ENCODE measurements at regions of chr10 and their contacts with region 1.

Region 1: GRCh38 chr10:61923213-61923949 is 21.9 kb downstream of the ARID5B start:
- DNase-seq: no peak
- ATAC-seq: no peak
- H3K4me3 Mint-ChIP-seq: no peak overlapping the region
- H3K27ac Mint-ChIP-seq: no peak overlapping the region
- H3K4me1 Mint-ChIP-seq: peaks cover 39% of the 10 kb centered on the region
- H3K27me3 Mint-ChIP-seq: no peaks in the 10 kb centered on the region
- CTCF ChIP-seq: no peak

Region 2: DNA sequence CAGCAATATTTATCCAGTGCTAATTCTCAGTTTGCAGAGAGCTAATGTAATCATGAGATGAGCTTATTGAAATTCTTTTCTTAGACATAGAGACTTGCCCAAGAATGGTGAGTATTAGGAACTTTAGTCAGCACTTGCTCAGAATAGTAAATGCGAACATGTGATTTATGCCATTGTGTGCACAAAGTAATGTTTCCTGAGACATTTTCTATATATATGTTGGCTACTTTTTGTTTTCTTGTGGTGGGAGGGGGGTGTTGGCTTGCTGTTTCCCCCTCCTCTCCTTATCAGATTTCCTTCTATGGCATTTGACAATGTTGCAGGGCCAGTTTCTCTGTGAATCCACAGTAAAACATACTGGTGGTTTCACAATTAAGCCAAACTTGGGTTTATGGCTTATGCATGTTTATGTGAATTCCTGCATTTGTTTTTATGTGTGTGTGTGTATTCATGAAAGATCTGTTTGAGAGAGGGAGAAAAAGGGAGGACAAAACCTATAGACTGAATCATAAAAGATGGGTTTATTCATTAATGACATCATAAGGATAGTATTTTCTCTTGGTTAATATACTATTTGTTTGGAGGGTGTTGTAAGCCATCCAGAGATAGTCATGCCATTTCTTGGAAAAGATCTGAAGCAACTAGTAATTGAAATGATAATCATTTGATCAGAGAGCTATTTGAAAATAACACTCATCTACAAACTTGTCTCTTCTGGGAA is 14.4 kb after region 1 on chr10:
- CTCF ChIA-PET with region 1: interaction called, 11 read pairs
- POLR2A ChIA-PET with region 1: interaction called, 10 read pairs
- intact Hi-C with region 1: no loop called
- DNase-seq: no peak
- ATAC-seq: peak; percentile 41
- H3K4me3 Mint-ChIP-seq: peak overlapping the region; percentile 9
- H3K27ac Mint-ChIP-seq: peak overlapping the region; percentile 92
- H3K4me1 Mint-ChIP-seq: peaks cover 81% of the 10 kb centered on the region
- H3K27me3 Mint-ChIP-seq: no peaks in the 10 kb centered on the region
- CTCF ChIP-seq: no peak

Region 3: GRCh38 chr10:61981402-61981841 is 58.0 kb after region 1 on chr10:
- CTCF ChIA-PET with region 1: no interaction called
- POLR2A ChIA-PET with region 1: no interaction called
- intact Hi-C with region 1: no loop called
- DNase-seq: no peak
- ATAC-seq: no peak
- H3K4me3 Mint-ChIP-seq: no peak overlapping the region
- H3K27ac Mint-ChIP-seq: no peak overlapping the region
- H3K4me1 Mint-ChIP-seq: peaks cover 48% of the 10 kb centered on the region
- H3K27me3 Mint-ChIP-seq: no peaks in the 10 kb centered on the region
- CTCF ChIP-seq: no peak

Region 4: DNA sequence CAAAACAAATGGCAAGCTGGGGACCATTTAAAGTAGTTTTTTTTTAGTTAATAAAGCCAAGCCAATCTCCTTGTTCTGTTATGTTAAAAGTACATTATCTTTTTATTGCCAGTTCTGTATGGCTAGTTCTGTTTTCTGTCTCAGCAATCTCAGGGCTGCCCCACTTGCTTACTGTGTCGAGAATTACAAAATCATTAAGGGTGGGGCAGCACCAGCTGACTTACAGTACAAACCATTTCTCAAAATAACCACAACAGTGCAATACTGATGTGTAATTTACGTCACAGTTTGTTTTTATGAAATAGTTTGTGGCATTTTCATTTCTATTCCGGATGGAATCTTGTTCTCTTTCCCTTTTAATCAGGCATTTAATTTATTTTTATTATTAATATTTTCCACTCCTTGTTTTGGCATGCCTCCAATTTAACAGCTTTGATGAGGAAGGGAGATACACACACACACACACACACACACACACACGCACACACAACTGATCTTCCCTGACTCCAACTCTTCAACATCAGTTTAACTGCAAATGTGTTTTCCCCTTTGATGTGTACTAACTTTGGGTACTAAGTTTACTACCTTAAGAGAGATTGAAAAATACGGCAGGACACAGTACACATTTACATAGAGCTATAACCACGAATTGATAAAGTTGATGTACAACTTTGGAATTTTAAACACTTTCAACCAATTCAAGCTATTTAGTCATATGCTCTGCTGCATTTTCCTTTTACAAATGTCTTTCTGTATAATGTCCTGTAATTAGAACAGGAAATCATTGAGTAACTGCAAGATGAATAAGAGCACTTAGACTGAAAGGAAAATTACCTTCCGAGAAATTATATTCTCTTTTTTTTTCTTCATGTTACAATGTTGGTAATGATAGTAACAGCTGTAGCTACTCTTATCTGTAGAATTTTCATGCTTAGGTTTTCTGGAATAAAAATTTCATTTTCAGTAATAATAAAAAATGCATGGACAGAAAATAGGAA is 69.6 kb after region 1 on chr10:
- CTCF ChIA-PET with region 1: no interaction called
- POLR2A ChIA-PET with region 1: no interaction called
- intact Hi-C with region 1: no loop called
- DNase-seq: peak; percentile 72
- ATAC-seq: peak; percentile 41
- H3K4me3 Mint-ChIP-seq: peak overlapping the region; percentile 68
- H3K27ac Mint-ChIP-seq: peak overlapping the region; percentile 95
- H3K4me1 Mint-ChIP-seq: peaks cover 66% of the 10 kb centered on the region
- H3K27me3 Mint-ChIP-seq: no peaks in the 10 kb centered on the region
- CTCF ChIP-seq: no peak

Region 5: DNA sequence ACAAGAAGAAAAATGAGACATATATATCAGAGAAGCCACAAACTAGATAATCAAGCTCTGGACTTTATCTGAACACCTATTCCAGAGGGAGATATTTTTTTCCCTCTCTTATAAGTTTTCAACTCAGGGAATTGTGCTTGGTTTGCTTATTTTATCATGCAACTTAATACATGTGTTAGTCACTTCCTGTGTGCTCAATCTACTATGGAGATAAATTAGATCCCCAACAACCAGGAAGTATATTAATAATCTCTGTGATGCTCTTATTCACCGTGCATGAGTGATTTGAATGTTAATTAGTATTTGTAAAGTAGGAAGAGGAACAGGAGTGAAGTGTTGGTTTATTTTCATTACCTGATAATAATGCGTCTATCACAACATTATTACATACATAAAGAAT is 411.9 kb after region 1 on chr10:
- CTCF ChIA-PET with region 1: no interaction called
- POLR2A ChIA-PET with region 1: no interaction called
- intact Hi-C with region 1: no loop called
- DNase-seq: no peak
- ATAC-seq: no peak
- H3K4me3 Mint-ChIP-seq: no peak overlapping the region
- H3K27ac Mint-ChIP-seq: no peak overlapping the region
- H3K4me1 Mint-ChIP-seq: no peaks in the 10 kb centered on the region
- H3K27me3 Mint-ChIP-seq: peaks cover 9% of the 10 kb centered on the region
- CTCF ChIP-seq: no peak

Measured in activated CD8-positive, alpha-beta T cell treated with anti-CD3 and anti-CD28 coated beads for 36 hours (primary cell).